HepG2 (cell line): ENCODE measurements at regions of chr4 and their contacts with region 1.

Region 1: DNA sequence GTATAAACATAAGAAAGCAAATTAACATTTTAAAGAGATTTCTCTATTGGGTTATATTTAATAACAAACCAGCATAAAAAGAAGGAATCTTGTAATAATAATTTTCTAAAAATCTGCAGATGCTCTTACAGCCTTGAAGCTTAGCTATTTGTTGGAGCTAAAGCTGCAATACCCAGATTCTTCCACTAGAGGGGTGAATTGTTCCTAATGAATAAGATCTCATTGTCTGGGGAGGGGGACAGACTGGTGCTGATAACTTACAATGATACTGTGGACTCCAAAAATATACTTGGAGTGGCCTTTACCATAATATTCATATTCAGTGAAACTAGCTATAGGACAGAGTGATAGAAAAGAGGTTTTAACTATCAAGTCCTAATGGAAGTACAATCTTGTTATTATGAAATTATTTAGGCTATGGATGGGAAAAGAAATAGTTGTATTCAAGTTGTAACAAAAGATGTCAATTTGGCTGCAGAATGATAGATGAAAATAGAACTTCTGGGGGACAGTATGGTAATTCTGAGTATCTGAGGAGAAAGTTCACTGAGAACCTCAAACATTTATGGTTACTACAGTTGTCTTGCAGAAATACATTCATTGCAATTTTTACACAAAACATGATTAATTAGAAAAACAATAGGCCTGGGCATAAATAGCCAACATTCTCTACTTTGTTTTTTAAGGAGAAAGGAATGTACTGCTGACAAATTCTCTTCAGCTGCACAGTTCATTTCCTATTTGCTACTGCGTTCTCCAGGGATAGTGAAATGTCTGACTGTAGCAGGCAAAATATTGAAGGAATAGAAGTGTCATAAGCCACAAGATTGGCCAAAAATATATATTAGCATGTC is 443.3 kb downstream of the GBA3 start:
- DNase-seq: peak; percentile 35
- ATAC-seq: peak; percentile 73
- H3K4me3 ChIP-seq: no peak overlapping the region
- H3K27ac ChIP-seq: no peak overlapping the region
- H3K4me1 ChIP-seq: no peaks in the 10 kb centered on the region
- H3K27me3 ChIP-seq: no peaks in the 10 kb centered on the region; a peak in 1 of 5 replicates
- CTCF ChIP-seq: peak; percentile 60
- EP300 ChIP-seq: no peak
- POLR2A ChIP-seq: no peak
- RAD21 ChIP-seq: no peak

Region 2: GRCh38 chr4:23070848-23071570 is 65.0 kb before region 1 on chr4:
- CTCF ChIA-PET with region 1: no interaction called
- POLR2A ChIA-PET with region 1: no interaction called
- in situ Hi-C with region 1: no loop called
- intact Hi-C with region 1: no loop called
- DNase-seq: no peak
- ATAC-seq: no peak
- H3K4me3 ChIP-seq: no peak overlapping the region
- H3K27ac ChIP-seq: no peak overlapping the region
- H3K4me1 ChIP-seq: no peaks in the 10 kb centered on the region
- H3K27me3 ChIP-seq: no peaks in the 10 kb centered on the region
- CTCF ChIP-seq: no peak
- EP300 ChIP-seq: no peak
- POLR2A ChIP-seq: no peak
- RAD21 ChIP-seq: no peak

Region 3: DNA sequence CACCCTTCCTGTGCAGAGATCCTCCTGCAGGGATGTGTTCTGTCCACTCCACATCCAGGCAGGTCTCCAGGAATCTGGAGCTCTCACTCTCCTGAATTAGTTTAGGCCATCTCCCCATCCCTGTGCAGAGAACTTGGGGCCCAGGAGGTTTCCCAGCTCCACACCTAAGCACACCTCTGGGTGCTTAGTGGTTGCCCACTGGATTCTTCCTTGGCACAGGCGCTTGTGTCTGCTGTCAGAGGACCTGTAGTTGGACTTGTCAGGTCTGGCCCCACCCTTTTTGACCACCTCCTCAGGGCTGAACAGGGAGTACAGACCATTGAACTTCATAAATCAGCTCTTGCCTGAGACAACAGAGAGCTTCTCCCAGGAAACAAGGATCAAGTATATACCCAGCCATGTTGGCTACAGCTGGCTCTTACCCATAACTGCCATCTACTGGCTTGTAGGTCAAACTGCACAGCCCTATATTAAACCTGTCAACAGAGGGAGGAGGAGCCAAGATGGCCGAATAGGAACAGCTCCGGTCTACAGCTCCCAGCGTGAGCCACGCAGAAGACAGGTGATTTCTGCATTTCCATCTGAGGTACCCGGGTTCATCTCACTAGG is 478.4 kb after region 1 on chr4:
- CTCF ChIA-PET with region 1: no interaction called
- POLR2A ChIA-PET with region 1: no interaction called
- in situ Hi-C with region 1: no loop called
- intact Hi-C with region 1: loop called (anchors 5 kb)
- DNase-seq: peak; percentile 50
- ATAC-seq: peak; percentile 98
- H3K4me3 ChIP-seq: no peak overlapping the region
- H3K27ac ChIP-seq: no peak overlapping the region
- H3K4me1 ChIP-seq: no peaks in the 10 kb centered on the region
- H3K27me3 ChIP-seq: no peaks in the 10 kb centered on the region
- CTCF ChIP-seq: peak; percentile 63
- EP300 ChIP-seq: no peak
- POLR2A ChIP-seq: no peak
- RAD21 ChIP-seq: no peak